A549 (cell line): ENCODE measurements at regions of chr7 and their contacts with region 1.

Region 1: DNA sequence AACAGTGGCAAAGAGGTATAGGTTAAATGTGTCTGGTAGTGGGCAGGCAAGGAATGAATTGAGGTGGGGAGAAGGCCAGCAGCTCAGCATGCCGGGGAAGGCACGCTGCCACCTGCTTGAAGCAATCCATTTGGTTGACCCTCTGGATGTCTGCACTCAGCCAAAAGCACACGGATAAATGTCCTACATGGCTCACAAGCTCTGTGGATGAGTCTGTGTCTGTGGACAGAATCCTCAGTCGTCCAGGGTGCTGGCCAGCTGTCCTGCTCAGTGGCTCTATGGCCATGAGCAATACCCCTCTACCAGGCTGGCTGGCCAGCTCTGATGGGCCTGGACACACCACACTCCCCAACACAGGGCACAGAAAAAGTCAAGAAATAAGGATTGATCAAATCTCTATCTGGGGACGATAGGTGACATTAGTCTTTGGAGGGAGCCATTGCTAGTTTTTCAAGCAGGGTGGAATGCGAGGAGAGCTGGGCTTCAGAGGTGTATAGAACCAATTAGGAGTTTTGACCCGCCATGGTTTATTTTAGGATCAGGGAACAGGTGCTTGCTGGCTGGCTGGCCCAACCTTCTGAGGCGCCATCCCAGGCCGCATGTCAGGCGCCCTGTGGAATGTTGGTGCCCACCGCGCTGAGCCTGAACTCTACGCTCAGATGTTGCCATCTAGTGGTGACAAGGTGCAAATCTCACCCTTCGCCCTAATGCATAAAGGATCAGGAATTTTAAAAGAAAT is 493.4 kb downstream of the TNS3 start:
- DNase-seq: peak; percentile 57 to 65
- ATAC-seq: peak; percentile 90 to 98
- H3K4me3 ChIP-seq: no peak overlapping the region
- H3K27ac ChIP-seq: peak overlapping the region; percentile 59 to 74
- H3K4me1 ChIP-seq: peaks cover 15% of the 10 kb centered on the region
- CTCF ChIP-seq: peak; percentile 91
- EP300 ChIP-seq: no peak
- POLR2A ChIP-seq: no peak
- RAD21 ChIP-seq: peak; percentile 95 to 98

Region 2: DNA sequence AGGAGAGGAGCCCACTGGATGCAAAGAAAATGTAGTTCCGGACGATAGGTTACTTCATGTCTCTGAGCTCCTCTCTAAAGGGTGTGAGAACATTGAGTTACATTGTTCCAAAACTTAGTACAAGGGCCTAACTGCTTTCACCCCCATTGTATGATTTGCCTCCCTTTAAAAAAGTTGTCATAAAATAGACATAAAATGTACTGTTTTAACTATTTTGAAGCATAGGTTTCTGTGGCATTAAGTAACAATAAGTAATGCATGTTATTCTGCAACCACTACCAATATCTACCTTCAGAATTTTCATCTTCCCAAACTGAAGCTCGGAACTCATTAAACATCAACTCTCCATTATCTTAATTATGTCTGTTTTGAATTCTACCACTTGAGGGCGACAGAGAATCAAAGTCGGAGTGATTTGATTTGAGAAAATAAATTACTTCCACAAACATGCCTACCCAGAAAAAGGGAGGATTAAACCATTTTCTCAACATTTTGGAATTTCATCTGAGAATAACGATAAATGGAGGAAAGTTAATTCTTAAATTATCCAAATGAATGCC is 1197.5 kb before region 1 on chr7:
- CTCF ChIA-PET with region 1: interaction called, 10 read pairs
- POLR2A ChIA-PET with region 1: no interaction called
- DNase-seq: peak in 1 of 2 experiments; percentile 38
- ATAC-seq: no peak
- H3K4me3 ChIP-seq: no peak overlapping the region
- H3K27ac ChIP-seq: peak overlapping the region in 1 of 2 experiments; percentile 86; a peak in 1 of 6 replicates
- H3K4me1 ChIP-seq: peaks cover 27% of the 10 kb centered on the region
- CTCF ChIP-seq: peak; percentile 87
- EP300 ChIP-seq: no peak
- POLR2A ChIP-seq: no peak
- RAD21 ChIP-seq: peak; percentile 81 to 87

Region 3: DNA sequence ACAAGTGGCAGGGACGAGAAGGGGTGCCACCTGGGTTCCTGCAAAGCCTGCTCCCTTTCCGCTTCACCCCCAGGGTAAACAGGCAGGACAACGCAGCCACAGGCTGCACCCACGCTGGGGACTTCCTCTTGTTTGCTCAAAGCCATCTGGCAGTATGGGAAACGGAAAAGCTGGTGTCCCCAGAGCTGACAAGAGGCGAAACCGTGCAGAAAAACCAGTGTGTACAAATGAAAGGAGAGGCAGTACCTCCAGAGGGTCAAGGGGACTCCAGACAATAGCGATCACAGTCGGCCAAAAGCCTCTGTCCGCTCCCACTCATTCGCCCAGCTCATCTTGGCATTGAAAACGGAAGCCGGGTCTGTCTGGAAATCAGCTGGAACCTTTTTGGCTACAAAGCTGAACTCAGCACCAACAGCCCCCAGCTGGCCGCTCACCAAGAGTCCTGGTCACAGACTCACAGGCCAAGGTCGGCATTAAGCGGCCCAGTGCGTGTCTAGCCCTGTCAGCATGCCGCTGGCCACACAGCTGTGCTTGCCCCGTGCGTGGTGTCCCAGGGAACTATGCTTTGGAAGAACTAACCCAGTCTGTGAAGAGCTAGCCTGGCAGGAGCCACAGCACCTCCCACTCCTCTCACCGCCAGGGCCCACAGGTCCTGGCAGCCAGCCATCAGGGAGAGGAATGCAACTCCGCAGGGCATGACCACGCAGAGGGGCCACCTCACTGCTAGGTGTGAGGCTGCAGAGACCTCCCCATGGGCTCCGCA is 483.0 kb after region 1 on chr7:
- CTCF ChIA-PET with region 1: no interaction called
- POLR2A ChIA-PET with region 1: no interaction called
- DNase-seq: peak in 1 of 2 experiments; percentile 81
- ATAC-seq: peak; percentile 38 to 55
- H3K4me3 ChIP-seq: peak overlapping the region; percentile 10; the same call in 2 of the 3 replicates
- H3K27ac ChIP-seq: peak overlapping the region; percentile 99 to 100
- H3K4me1 ChIP-seq: peaks cover 99% of the 10 kb centered on the region
- CTCF ChIP-seq: no peak
- EP300 ChIP-seq: peak in 1 of 2 experiments; percentile 48; a peak in 1 of 5 replicates
- POLR2A ChIP-seq: no peak
- RAD21 ChIP-seq: 0 out of 5 replicates have a peak, but pooled peaks of 1 of the 2 experiments have one; percentile 12